ENCODE measurements at regions of chr1 and their contacts with region 1.

Region 1: GRCh38 chr1:71357708-71358107 is 276.9 kb upstream of the ZRANB2 start:
- DNase-seq: peak in 1 of 2 experiments; percentile 65
- H3K4me3 ChIP-seq: no peak overlapping the region
- H3K27ac ChIP-seq: no peak overlapping the region
- H3K4me1 ChIP-seq: no peaks in the 10 kb centered on the region
- H3K27me3 ChIP-seq: no peaks in the 10 kb centered on the region
- CTCF ChIP-seq: peak; percentile 52 to 77 (median 64)
- EP300 ChIP-seq: no peak
- POLR2A ChIP-seq: no peak
- RAD21 ChIP-seq: peak; percentile 65 to 72

Region 2: GRCh38 chr1:70807088-70807664 is 550.5 kb before region 1 on chr1:
- CTCF ChIA-PET with region 1: no interaction called
- POLR2A ChIA-PET with region 1: no interaction called
- DNase-seq: no peak
- H3K4me3 ChIP-seq: no peak overlapping the region
- H3K27ac ChIP-seq: no peak overlapping the region
- H3K4me1 ChIP-seq: no peaks in the 10 kb centered on the region
- H3K27me3 ChIP-seq: no peaks in the 10 kb centered on the region
- CTCF ChIP-seq: no peak
- EP300 ChIP-seq: no peak
- POLR2A ChIP-seq: no peak
- RAD21 ChIP-seq: no peak

Region 3: DNA sequence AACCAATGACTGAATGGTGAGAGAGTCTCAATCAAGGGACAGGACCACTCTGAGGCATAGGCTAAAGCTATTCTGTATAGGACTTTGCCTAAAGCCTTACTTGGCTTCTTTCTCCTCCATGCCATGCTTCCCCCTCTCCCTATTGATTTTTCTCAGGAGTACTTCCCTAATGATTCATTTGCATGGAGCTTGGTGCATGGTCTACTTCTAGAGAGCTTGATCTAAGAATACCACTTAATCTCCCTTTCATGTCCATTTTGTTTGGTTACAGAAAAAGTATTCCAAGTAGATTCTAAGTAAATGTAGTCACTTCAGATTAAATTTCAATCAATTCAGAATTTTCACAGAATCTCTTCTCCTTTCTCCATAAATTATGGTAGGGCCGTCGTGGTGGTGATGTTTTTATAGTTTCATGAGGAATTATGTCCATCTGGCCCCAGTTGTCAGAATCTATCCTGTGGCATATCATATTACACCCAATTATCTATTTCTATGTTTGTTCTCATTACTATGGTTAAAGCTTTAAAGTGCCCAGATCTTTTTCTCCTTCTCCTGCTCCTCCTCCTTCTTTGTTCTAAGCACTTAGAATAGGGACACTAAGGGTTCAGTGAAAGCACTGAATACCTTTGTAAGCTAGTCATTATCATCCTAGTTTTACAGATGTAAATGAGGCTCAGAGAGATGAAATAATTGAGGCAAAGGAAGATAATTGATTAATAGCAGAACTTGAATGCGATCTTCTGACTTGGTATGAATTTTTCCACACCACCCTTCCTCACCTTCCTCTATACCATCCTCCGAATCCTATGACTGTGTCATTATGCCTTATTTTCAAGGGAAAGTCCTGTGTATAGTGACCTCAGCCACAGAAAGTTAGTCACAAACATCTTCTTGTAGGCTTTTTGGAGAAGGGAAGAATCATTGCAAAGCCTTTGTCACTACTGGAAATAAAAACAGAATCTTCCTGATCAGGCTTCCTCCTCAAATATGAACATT is 191.2 kb before region 1 on chr1:
- CTCF ChIA-PET with region 1: no interaction called
- POLR2A ChIA-PET with region 1: no interaction called
- DNase-seq: no peak
- H3K4me3 ChIP-seq: no peak overlapping the region
- H3K27ac ChIP-seq: no peak overlapping the region
- H3K4me1 ChIP-seq: no peaks in the 10 kb centered on the region
- H3K27me3 ChIP-seq: no peaks in the 10 kb centered on the region
- CTCF ChIP-seq: no peak
- EP300 ChIP-seq: no peak
- POLR2A ChIP-seq: no peak
- RAD21 ChIP-seq: no peak

Region 4: DNA sequence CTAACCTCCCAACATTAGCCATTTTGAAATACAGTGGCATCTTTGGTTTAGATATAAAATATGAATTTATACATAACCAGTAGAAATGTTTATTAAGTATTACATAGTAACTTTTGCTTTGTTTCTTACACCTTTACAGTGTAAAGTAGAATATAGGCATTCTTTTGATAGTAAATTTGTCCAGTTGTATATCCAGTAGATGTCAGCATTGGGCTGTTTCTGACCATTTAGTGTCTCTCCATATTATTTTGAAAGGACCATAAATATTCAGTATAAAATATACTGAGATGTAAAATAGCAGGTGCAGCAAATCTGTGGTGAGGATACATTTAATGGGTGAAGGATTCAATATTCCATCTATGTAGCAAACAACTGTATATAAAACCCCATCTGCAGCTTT is 161.0 kb before region 1 on chr1:
- CTCF ChIA-PET with region 1: interaction called, 35 read pairs
- POLR2A ChIA-PET with region 1: no interaction called
- DNase-seq: no peak
- H3K4me3 ChIP-seq: no peak overlapping the region
- H3K27ac ChIP-seq: no peak overlapping the region
- H3K4me1 ChIP-seq: no peaks in the 10 kb centered on the region
- H3K27me3 ChIP-seq: no peaks in the 10 kb centered on the region
- CTCF ChIP-seq: peak in 2 of 3 experiments; percentile 4 to 7; a peak in 2 of 4 replicates
- EP300 ChIP-seq: no peak
- POLR2A ChIP-seq: no peak
- RAD21 ChIP-seq: peak; percentile 41 to 49

Region 5: GRCh38 chr1:71343686-71344416 is 13.9 kb before region 1 on chr1:
- CTCF ChIA-PET with region 1: interaction called, 15 read pairs
- POLR2A ChIA-PET with region 1: no interaction called
- DNase-seq: no peak
- H3K4me3 ChIP-seq: no peak overlapping the region
- H3K27ac ChIP-seq: no peak overlapping the region
- H3K4me1 ChIP-seq: no peaks in the 10 kb centered on the region
- H3K27me3 ChIP-seq: peaks cover 0 to 1% (median 0%) of the 10 kb centered on the region in 4 experiments; a peak in 1 of 7 replicates
- CTCF ChIP-seq: peak; percentile 24 to 50 (median 32); a peak in 2 of 4 replicates
- EP300 ChIP-seq: no peak
- POLR2A ChIP-seq: no peak
- RAD21 ChIP-seq: peak; percentile 47 to 58

Region 6: DNA sequence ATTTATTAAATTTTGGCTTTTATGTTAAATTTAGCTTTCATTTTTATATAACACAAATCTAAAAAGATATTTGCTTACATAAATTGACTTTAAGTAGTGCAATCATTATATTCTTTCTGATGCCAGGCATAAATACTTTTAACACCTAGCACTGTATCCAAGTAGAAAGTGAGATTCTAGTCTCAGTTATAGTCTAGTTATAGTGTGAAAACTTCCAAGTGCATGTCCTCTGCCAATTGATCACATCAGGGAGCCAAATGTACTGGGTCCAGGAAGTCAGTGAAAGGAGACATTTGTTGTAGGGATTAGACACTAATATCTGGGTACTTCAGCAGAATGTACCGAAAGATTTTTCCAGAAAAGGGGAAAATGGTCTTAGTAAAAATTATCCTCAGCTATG is 13.9 kb after region 1 on chr1:
- CTCF ChIA-PET with region 1: interaction called, 12 read pairs
- POLR2A ChIA-PET with region 1: no interaction called
- DNase-seq: no peak
- H3K4me3 ChIP-seq: no peak overlapping the region
- H3K27ac ChIP-seq: no peak overlapping the region
- H3K4me1 ChIP-seq: no peaks in the 10 kb centered on the region
- H3K27me3 ChIP-seq: no peaks in the 10 kb centered on the region
- CTCF ChIP-seq: no peak
- EP300 ChIP-seq: no peak
- POLR2A ChIP-seq: no peak
- RAD21 ChIP-seq: no peak

Region 7: GRCh38 chr1:71473331-71473730 is 115.6 kb after region 1 on chr1:
- CTCF ChIA-PET with region 1: no interaction called
- POLR2A ChIA-PET with region 1: no interaction called
- DNase-seq: no peak
- H3K4me3 ChIP-seq: no peak overlapping the region
- H3K27ac ChIP-seq: no peak overlapping the region
- H3K4me1 ChIP-seq: peaks cover 0 to 2% (median 0%) of the 10 kb centered on the region in 4 experiments; a peak in 1 of 7 replicates
- H3K27me3 ChIP-seq: no peaks in the 10 kb centered on the region
- CTCF ChIP-seq: no peak
- EP300 ChIP-seq: no peak
- POLR2A ChIP-seq: no peak
- RAD21 ChIP-seq: no peak

Measured in H1 (cell line).